PC-9 (cell line): ENCODE measurements at regions of chr6 and their contacts with region 1.

Region 1: DNA sequence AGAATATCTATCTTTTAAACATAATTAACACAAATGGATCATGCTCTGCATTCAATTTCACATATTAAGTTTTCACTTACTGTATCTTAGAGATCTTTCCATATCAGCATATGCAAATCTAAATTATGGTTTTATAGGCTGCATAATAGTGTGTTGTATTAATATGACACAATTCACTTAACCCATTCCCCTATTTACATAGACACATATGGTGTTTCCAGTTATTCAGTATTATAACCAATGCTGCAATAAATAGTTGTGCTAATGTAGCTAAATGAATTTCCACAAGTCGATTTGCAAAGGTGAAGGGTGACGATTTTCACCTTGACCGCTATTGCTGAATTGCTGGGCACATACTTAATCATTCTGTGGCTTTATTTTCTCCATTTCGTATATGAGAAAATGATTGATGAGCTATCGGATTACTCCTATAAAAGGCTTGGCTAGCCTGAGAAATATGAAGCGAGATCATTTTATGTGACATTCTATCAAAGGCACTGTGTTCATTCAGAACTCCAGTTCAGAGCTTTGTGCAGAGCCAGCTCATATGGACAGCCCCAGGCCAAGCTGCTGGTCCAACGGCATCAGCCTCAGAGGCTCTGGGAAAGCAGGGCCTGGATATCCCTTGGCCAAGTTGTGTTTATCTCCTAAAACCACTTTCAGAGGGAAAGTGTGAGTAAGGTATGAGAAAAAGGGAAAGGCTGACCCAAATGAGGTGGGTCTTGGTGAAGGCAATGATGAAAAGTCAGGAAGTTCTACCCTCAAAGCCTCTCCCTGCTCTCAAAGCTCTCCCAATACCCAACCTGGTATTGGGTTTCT is 50.8 kb downstream of the GFOD1 start:
- DNase-seq: no peak
- H3K4me3 ChIP-seq: no peak overlapping the region
- H3K27ac ChIP-seq: no peak overlapping the region
- H3K4me1 ChIP-seq: no peaks in the 10 kb centered on the region
- H3K27me3 ChIP-seq: no peaks in the 10 kb centered on the region
- CTCF ChIP-seq: no peak

Region 2: DNA sequence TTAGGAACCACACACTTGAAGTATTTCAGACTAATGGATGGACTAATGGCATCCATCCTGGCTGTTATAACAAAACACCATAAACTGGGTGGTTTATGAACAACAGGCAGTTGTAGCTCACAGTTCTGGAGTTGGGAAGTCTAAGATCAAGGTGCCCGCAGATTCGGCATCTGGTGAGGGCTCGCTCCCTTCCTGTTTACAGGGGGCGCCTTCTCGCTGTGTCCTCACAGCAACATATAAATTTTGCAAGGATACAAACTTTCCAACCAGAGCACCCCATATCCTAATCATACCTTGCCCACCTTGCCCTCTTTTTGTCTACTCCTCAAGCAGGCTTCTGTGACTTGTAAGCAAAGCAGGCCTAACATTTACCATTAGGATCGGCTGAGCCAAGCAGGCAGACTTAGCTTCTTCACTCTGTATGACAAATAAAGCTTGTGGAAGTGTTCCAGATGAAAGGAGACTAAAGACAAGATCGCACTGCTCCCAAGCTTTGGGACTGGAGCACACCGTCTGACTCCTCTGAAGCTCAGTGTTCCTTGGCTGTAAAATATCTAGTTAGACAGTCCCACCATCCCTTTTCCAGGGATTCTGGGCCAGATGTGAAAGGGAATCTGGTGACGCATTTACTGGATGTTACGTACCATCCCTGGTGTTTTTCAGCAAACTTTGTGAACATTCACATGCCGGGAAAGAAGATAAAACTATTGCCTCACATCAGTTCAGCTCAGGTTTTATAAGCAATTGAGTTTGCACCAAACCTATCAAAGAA is 15.9 kb after region 1 on chr6:
- CTCF ChIA-PET with region 1: no interaction called
- POLR2A ChIA-PET with region 1: interaction called, 12 read pairs
- intact Hi-C with region 1: no loop called
- DNase-seq: no peak
- H3K4me3 ChIP-seq: no peak overlapping the region
- H3K27ac ChIP-seq: no peak overlapping the region
- H3K4me1 ChIP-seq: peaks cover 22% of the 10 kb centered on the region
- H3K27me3 ChIP-seq: no peaks in the 10 kb centered on the region
- CTCF ChIP-seq: no peak